Activated CD4-positive, alpha-beta memory T cell treated with anti-CD3 and anti-CD28 coated beads for 36 hours (primary cell): ENCODE measurements at regions of chr15 and their contacts with region 1.

Region 1: DNA sequence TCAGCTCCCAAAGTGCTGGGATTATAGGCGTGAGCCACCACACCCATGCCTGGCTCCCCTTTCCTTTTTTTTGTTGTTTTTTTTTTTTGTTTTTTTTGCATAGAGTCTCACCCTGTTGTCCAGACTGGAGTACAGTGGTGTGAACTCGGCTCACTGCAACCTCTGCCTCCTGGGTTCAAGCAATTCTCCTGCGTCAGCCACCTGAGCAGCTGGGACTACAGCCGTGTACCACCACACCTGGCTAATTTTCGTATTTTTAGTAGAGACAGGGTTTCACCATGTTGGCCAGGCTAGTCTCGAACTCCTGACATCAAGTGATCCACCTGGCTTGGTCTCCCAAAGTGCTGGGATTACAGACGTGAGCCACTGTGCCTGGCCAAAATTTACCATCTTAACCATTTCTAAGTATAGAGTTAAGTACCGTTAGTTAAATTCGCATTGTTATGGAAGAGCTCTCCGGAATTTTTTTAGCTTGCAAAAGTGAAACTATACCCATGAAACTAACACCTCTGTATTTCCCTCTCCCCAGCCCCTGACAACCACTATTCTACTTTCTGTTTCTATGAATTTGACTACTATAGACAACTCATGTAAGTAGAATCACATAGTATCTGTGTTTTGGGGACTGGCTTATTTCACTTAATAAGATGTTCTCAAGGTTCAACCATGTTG is 70.9 kb upstream of the C15orf39 start:
- DNase-seq: no peak
- H3K4me3 Mint-ChIP-seq: no peak overlapping the region
- H3K27ac Mint-ChIP-seq: no peak overlapping the region
- H3K4me1 Mint-ChIP-seq: peaks cover 10% of the 10 kb centered on the region
- H3K27me3 Mint-ChIP-seq: peaks cover 7% of the 10 kb centered on the region

Region 2: GRCh38 chr15:75067123-75067830 is 63.5 kb before region 1 on chr15:
- CTCF ChIA-PET with region 1: interaction called, 3 read pairs
- POLR2A ChIA-PET with region 1: no interaction called
- intact Hi-C with region 1: loop called (anchors 1 kb)
- DNase-seq: peak; percentile 73
- H3K4me3 Mint-ChIP-seq: no peak overlapping the region
- H3K27ac Mint-ChIP-seq: peak overlapping the region; percentile 47
- H3K4me1 Mint-ChIP-seq: peaks cover 36% of the 10 kb centered on the region
- H3K27me3 Mint-ChIP-seq: peaks cover 1% of the 10 kb centered on the region

Region 3: DNA sequence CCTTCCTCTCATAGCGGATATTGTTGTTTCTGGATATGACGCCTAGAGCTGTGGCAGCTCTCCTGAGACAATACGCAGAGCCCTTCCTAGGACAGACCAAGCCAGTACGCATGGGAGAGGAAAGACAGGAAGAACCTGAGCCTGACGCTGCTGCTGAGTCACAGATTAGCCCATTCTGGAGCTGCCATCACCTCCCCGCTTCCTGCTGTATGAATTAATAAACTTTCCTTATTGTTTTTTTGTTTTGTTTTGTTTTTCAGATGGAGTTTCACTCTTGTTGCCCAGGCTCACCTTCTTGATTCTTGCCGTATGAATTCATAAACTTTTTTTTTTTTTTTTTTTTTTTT is 40.4 kb before region 1 on chr15:
- CTCF ChIA-PET with region 1: no interaction called
- POLR2A ChIA-PET with region 1: interaction called, 3 read pairs
- intact Hi-C with region 1: loop called (anchors 1 kb)
- DNase-seq: no peak
- H3K4me3 Mint-ChIP-seq: no peak overlapping the region
- H3K27ac Mint-ChIP-seq: no peak overlapping the region
- H3K4me1 Mint-ChIP-seq: peaks cover 16% of the 10 kb centered on the region
- H3K27me3 Mint-ChIP-seq: peaks cover 13% of the 10 kb centered on the region

Region 4: DNA sequence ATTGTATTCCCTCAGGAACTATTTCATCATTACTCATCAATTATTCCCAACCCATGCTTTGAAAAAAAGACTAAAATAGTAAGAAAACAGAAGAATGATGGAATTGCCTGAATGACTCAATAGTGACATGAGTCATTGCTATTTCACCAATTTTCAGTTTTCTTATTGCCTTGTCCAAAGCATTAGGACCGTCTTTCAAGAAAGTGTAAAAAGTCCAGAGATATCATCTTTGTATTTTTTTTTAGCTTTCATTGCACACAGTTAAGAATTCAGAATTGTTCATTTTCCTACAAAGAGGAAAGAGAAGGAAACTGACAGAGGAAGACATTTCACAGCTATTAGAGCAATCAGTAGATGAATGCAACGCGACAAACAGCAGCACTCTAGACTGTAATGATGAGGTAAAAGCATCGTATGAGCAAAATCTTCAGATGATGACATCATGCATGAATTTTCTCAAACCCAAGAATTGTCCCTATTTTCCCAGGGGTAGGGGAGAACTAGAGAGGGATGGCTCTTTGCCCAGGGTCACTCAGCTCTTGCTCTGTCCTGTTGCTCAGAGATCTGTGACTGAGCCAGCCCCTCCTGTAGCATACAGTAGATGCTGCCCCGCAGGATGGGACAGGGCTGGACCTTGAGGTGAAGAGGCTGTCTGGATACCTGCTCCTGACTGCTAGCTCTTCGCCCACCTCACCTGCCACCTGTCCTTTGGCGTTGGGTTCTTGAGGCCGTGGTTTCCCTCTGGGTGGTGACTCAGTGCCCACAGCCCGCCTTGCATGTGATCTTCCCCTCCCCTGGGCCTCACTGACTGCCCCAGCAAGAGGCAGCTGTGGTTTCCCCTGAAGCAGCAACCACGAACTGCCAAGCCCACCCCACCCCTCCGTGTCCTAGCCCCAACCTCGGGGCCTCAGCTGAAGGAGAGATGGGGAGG is 22.6 kb before region 1 on chr15:
- CTCF ChIA-PET with region 1: interaction called, 9 read pairs
- POLR2A ChIA-PET with region 1: interaction called, 5 read pairs
- intact Hi-C with region 1: loop called (anchors 1 kb)
- DNase-seq: peak; percentile 84
- H3K4me3 Mint-ChIP-seq: no peak overlapping the region
- H3K27ac Mint-ChIP-seq: peak overlapping the region; percentile 40
- H3K4me1 Mint-ChIP-seq: peaks cover 26% of the 10 kb centered on the region
- H3K27me3 Mint-ChIP-seq: peaks cover 8% of the 10 kb centered on the region

Region 5: DNA sequence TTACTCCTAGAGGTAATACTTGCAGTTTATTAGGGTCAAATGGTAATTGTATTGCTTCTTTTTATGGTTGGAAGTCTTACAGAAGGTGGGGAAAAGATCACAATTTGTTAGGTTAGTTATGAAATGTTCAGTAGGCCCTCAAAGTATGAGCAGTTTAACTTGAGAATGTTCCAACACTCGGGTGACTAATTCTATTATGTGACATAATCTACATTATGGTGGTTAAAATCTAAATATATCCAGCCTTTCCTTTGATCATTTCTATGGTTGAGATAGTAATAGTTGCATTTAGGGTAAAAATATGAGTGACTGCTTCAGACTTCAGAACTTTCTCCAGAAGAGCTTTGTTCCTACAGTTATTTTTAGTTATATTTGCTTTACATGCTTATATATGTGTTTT is 753.3 kb after region 1 on chr15:
- CTCF ChIA-PET with region 1: no interaction called
- POLR2A ChIA-PET with region 1: no interaction called
- intact Hi-C with region 1: no loop called
- DNase-seq: no peak
- H3K4me3 Mint-ChIP-seq: no peak overlapping the region
- H3K27ac Mint-ChIP-seq: no peak overlapping the region
- H3K4me1 Mint-ChIP-seq: peaks cover 4% of the 10 kb centered on the region
- H3K27me3 Mint-ChIP-seq: no peaks in the 10 kb centered on the region